Activated CD4-positive, alpha-beta T cell treated with anti-CD3 and anti-CD28 coated beads for 36 hours (primary cell): ENCODE measurements at regions of chr3 and their contacts with region 1.

Region 1: DNA sequence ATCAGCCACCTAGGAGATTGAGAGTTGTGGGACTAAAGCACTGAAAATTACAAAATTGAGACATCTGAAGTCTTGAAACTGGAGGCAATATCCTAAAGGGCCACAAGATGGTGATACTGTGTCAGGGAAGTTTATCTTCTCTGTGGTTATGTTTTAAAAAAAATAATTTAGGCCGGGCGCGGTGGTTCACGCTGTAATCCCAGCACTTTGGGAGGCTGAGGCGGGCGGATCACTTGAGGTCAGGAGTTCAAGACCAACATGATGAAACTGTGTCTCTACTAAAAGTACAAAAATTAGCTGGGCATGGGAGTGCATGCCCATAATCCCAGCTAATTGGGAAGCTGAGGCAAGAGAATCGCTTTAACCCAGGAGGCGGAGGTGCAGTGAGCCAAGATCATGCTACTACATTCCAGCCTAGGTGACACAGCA is 17.9 kb upstream of the NIT2 start:
- DNase-seq: peak; percentile 42
- ATAC-seq: peak; percentile 75
- H3K4me3 Mint-ChIP-seq: no peak overlapping the region
- H3K27ac Mint-ChIP-seq: no peak overlapping the region
- H3K4me1 Mint-ChIP-seq: peaks cover 9% of the 10 kb centered on the region
- H3K27me3 Mint-ChIP-seq: no peaks in the 10 kb centered on the region

Region 2: DNA sequence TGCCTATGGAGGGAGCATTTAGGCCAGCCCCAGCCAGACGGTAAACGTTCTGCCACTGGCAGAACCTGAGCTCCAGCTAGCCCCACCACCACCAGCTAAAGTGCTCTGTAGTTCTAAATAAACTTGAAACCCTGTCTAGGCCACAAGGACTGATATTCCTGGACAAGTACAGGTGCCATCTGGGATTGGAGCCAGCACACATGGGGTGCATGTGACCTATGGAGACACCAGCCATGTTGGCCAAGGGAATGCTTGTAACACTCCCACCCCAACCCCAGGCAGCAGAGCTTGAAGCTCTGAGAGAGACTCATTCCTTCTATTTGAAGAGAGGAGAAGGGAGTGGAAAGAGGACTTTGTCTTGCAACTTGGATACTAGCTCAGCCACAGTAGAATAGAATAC is 1130.6 kb before region 1 on chr3:
- CTCF ChIA-PET with region 1: no interaction called
- POLR2A ChIA-PET with region 1: no interaction called
- intact Hi-C with region 1: no loop called
- DNase-seq: no peak
- ATAC-seq: no peak
- H3K4me3 Mint-ChIP-seq: no peak overlapping the region
- H3K27ac Mint-ChIP-seq: no peak overlapping the region
- H3K4me1 Mint-ChIP-seq: no peaks in the 10 kb centered on the region
- H3K27me3 Mint-ChIP-seq: no peaks in the 10 kb centered on the region

Region 3: GRCh38 chr3:99833617-99834205 is 482.9 kb before region 1 on chr3:
- CTCF ChIA-PET with region 1: interaction called, 5 read pairs
- POLR2A ChIA-PET with region 1: no interaction called
- intact Hi-C with region 1: loop called in 1 of 2 experiments (anchors 2 kb)
- DNase-seq: no peak
- ATAC-seq: no peak
- H3K4me3 Mint-ChIP-seq: no peak overlapping the region
- H3K27ac Mint-ChIP-seq: no peak overlapping the region
- H3K4me1 Mint-ChIP-seq: peaks cover 8% of the 10 kb centered on the region
- H3K27me3 Mint-ChIP-seq: no peaks in the 10 kb centered on the region

Region 4: GRCh38 chr3:100023150-100023549 is 293.5 kb before region 1 on chr3:
- CTCF ChIA-PET with region 1: no interaction called
- POLR2A ChIA-PET with region 1: no interaction called
- intact Hi-C with region 1: no loop called
- DNase-seq: no peak
- ATAC-seq: no peak
- H3K4me3 Mint-ChIP-seq: no peak overlapping the region
- H3K27ac Mint-ChIP-seq: no peak overlapping the region
- H3K4me1 Mint-ChIP-seq: no peaks in the 10 kb centered on the region
- H3K27me3 Mint-ChIP-seq: no peaks in the 10 kb centered on the region

Region 5: GRCh38 chr3:100254168-100254777 is 62.4 kb before region 1 on chr3:
- CTCF ChIA-PET with region 1: no interaction called
- POLR2A ChIA-PET with region 1: no interaction called
- intact Hi-C with region 1: loop called in 1 of 2 experiments (anchors 10 kb)
- DNase-seq: peak; percentile 58
- ATAC-seq: peak; percentile 80
- H3K4me3 Mint-ChIP-seq: no peak overlapping the region
- H3K27ac Mint-ChIP-seq: no peak overlapping the region
- H3K4me1 Mint-ChIP-seq: peaks cover 11% of the 10 kb centered on the region
- H3K27me3 Mint-ChIP-seq: peaks cover 2% of the 10 kb centered on the region